Activated naive CD4-positive, alpha-beta T cell treated with anti-CD3 and anti-CD28 coated beads for 36 hours (primary cell): ENCODE measurements at regions of chr21 and their contacts with region 1.

Region 1: GRCh38 chr21:31509194-31510017 is 150.1 kb upstream of the SOD1 start:
- DNase-seq: peak; percentile 96
- H3K4me3 Mint-ChIP-seq: peak overlapping the region; percentile 43
- H3K27ac Mint-ChIP-seq: peak overlapping the region; percentile 80
- H3K4me1 Mint-ChIP-seq: peaks cover 33% of the 10 kb centered on the region
- H3K27me3 Mint-ChIP-seq: no peaks in the 10 kb centered on the region

Region 2: DNA sequence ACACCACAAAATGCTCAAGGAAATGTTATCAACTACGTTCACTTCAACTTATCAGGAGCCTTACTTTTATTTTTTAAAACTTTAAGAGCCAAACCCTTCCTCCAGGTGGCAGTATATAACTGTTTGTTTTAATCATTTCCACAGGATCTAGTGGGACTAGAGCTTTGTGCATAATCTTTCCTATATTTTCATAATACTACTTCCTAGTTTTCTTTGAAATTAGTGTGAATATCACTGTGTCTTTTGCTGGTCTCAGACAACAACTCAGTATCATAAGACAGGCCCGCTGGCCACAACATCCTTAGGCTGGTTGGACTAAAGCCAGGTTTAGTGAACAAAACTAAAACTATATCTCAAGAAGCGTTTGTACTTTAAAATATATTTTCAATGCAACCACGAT is 310.8 kb before region 1 on chr21:
- CTCF ChIA-PET with region 1: interaction called, 3 read pairs
- intact Hi-C with region 1: loop called (anchors 1 kb)
- DNase-seq: no peak
- H3K4me3 Mint-ChIP-seq: no peak overlapping the region
- H3K27ac Mint-ChIP-seq: no peak overlapping the region
- H3K4me1 Mint-ChIP-seq: peaks cover 51% of the 10 kb centered on the region
- H3K27me3 Mint-ChIP-seq: no peaks in the 10 kb centered on the region

Region 3: DNA sequence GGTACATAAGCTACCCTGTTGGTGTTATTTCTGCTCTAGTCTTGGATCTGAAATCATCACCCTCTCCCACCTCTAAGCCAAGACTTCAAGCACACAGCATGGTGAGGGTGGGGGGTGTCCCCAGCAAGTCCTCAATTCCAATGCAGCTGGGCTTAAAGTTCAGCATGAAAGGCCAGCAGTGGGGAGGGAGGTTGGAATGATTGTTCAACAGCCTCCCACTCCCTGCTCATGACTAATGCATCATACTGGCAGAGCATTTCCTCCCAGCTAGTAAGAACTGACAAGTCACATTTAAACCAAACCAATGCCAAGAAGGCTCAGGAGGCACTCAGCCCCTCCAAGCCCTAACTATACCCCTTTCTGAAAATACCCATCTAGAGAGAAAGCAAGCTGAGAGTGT is 215.4 kb before region 1 on chr21:
- CTCF ChIA-PET with region 1: no interaction called
- intact Hi-C with region 1: loop called (anchors 1 kb)
- DNase-seq: peak; percentile 88
- H3K4me3 Mint-ChIP-seq: no peak overlapping the region
- H3K27ac Mint-ChIP-seq: peak overlapping the region; percentile 84
- H3K4me1 Mint-ChIP-seq: peaks cover 44% of the 10 kb centered on the region
- H3K27me3 Mint-ChIP-seq: no peaks in the 10 kb centered on the region

Region 4: GRCh38 chr21:31343680-31344480 is 165.5 kb before region 1 on chr21 and contains the start of gene TIAM1:
- CTCF ChIA-PET with region 1: no interaction called
- intact Hi-C with region 1: loop called (anchors 1 kb)
- DNase-seq: peak; percentile 58
- H3K4me3 Mint-ChIP-seq: peak within 1 kb of the TSS; percentile 91
- H3K27ac Mint-ChIP-seq: peak within 1 kb of the TSS; percentile 88
- H3K4me1 Mint-ChIP-seq: peaks cover 58% of the 10 kb centered on the region
- H3K27me3 Mint-ChIP-seq: no peaks in the 10 kb centered on the region
- total RNA-seq, gene TIAM1: 50.1 to 51.0 TPM

Region 5: GRCh38 chr21:31460980-31461379 is 48.4 kb before region 1 on chr21:
- CTCF ChIA-PET with region 1: no interaction called
- intact Hi-C with region 1: loop called (anchors 1 kb)
- DNase-seq: peak; percentile 39
- H3K4me3 Mint-ChIP-seq: peak overlapping the region; percentile 21
- H3K27ac Mint-ChIP-seq: no peak overlapping the region
- H3K4me1 Mint-ChIP-seq: peaks cover 6% of the 10 kb centered on the region
- H3K27me3 Mint-ChIP-seq: no peaks in the 10 kb centered on the region